Activated CD8-positive, alpha-beta memory T cell treated with anti-CD3 and anti-CD28 coated beads, Interleukin-2, amount 10 ng/mL, durations not matched to agents 7 days and 5 days (primary cell): ENCODE measurements at regions of chr15 and their contacts with region 1.

Region 1: GRCh38 chr15:76973362-76973743 is 21.6 kb upstream of the PSTPIP1 start:
- DNase-seq: peak; percentile 81
- ATAC-seq: peak; percentile 71
- H3K4me3 Mint-ChIP-seq: no peak overlapping the region
- H3K27ac Mint-ChIP-seq: no peak overlapping the region
- H3K4me1 Mint-ChIP-seq: peaks cover 34% of the 10 kb centered on the region
- H3K27me3 Mint-ChIP-seq: no peaks in the 10 kb centered on the region

Region 2: GRCh38 chr15:76185716-76186115 is 787.6 kb before region 1 on chr15:
- CTCF ChIA-PET with region 1: no interaction called
- DNase-seq: peak; percentile 44
- ATAC-seq: no peak
- H3K4me3 Mint-ChIP-seq: no peak overlapping the region
- H3K27ac Mint-ChIP-seq: no peak overlapping the region
- H3K4me1 Mint-ChIP-seq: peaks cover 23% of the 10 kb centered on the region
- H3K27me3 Mint-ChIP-seq: peaks cover 67% of the 10 kb centered on the region

Region 3: DNA sequence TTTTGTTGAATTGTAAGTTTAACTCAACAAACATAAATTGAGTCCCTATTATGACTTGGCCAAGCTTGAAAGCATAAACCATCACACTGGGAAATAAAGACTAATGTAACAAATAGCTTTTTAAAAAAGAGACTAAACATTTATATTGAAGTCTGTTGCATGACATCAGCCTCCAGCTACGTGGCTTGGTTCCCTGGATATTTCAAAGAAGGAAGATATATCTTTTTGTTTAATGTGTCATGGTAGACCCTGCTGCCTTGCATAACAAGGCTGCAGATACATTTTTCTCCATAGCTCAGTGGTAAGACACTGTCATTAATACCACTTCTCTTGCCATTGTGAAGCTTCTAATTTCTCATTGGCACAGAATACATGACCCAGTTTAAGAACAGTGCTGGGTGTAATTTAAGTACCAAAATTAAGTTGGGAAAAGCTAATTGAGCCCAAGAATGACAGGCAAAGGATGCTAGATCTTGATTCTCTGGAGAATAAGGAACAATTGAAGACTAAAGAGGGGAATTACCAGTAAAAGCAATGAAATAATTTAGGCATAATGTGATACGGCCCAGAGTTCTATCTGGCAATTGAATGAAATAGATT is 27.8 kb before region 1 on chr15:
- CTCF ChIA-PET with region 1: interaction called, 11 read pairs
- DNase-seq: no peak
- ATAC-seq: no peak
- H3K4me3 Mint-ChIP-seq: no peak overlapping the region
- H3K27ac Mint-ChIP-seq: no peak overlapping the region
- H3K4me1 Mint-ChIP-seq: peaks cover 3% of the 10 kb centered on the region
- H3K27me3 Mint-ChIP-seq: no peaks in the 10 kb centered on the region

Region 4: DNA sequence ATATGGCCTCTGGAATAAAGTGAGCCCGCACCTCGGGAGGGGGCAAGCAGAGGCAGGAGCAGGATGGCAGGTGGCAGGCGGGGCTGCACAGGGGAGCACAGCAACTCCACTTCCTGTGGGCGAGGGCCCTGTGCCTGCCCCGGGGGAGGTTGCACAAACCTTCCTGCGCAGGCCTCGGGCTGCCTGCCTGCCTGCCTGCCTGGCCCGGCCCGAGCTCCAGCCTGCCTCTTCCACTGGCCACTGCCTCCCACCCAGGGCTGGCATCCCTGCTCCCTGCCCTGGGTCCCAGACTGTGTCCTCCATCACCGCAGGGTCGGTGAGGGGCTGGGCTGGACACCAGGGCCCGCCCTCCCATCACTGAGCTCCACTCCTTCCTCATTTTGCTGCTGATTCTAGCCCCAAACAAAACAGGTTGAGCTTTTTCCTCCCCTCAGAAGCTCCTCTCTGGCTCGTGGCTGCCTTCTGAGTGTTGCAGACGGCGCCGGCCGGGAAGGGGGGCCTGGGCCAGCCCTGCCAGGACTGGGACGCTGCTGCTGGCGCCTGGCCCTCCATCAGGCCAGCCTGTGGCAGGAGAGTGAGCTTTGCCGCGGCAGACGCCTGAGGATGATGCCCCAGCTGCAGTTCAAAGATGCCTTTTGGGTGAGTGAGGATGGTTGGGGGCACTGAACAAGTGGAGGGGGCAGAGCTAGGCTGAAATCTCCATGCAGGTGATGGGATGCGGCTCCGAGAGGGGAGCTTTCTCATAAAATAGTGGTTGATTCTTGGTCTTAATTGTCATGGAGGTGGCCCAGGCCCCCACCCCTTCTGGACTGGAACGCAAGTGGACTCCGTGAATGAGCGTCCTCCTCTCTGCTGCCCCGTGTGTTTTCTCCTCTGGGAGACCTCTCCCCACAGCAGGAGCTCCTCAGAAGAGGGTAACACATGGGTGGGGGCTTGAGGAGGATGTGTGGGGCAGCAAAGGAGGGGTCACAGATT is 21.9 kb after region 1 on chr15 and contains the start of gene PSTPIP1:
- CTCF ChIA-PET with region 1: interaction called, 31 read pairs
- DNase-seq: peak; percentile 88
- ATAC-seq: peak; percentile 74
- H3K4me3 Mint-ChIP-seq: peak within 1 kb of the TSS; percentile 97
- H3K27ac Mint-ChIP-seq: peak within 1 kb of the TSS; percentile 98
- H3K4me1 Mint-ChIP-seq: peaks cover 65% of the 10 kb centered on the region
- H3K27me3 Mint-ChIP-seq: no peaks in the 10 kb centered on the region
- total RNA-seq, gene PSTPIP1: 157 to 255 TPM

Region 5: DNA sequence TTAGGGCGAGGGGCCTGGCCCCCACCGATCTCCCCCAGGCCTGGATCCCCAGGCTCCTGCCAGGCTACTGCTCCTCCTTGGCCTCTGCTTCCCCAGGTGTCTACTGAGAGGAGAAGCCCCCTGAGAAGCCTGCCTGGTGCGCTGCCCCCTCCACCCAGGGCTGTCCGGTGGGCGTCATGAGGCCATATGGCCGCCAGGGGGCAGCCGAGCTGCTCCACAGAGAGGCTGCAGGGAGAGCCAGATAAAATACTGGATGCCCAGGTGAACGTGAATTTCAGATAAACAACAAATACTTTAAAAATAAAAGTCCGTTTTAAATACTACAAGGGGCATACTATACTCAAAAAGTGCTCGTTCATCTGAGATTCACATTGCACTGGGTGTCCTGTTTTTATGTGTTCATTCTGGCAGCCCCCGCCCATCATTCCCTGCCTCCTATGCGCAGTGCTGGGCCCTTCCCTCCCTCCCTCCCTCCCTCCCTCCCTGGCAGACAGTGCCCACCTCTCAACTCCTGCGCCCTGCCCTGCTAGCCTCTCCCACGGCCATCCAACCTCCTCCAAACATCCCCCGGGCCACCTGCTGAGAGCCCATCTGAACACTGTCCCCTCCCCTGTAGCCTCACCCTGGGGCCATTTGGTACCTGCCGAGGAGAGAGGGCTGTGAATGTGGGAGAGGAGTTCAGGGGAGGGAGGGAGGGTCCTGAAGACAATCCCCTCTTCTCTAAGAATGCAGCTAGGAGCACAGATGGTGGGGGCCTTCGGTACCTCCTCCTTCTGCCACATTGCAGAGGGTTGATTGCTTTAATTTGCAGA is 51.1 kb after region 1 on chr15:
- CTCF ChIA-PET with region 1: interaction called, 57 read pairs
- DNase-seq: peak; percentile 79
- ATAC-seq: peak; percentile 20
- H3K4me3 Mint-ChIP-seq: no peak overlapping the region
- H3K27ac Mint-ChIP-seq: peak overlapping the region; percentile 99
- H3K4me1 Mint-ChIP-seq: peaks cover 61% of the 10 kb centered on the region
- H3K27me3 Mint-ChIP-seq: no peaks in the 10 kb centered on the region

Region 6: DNA sequence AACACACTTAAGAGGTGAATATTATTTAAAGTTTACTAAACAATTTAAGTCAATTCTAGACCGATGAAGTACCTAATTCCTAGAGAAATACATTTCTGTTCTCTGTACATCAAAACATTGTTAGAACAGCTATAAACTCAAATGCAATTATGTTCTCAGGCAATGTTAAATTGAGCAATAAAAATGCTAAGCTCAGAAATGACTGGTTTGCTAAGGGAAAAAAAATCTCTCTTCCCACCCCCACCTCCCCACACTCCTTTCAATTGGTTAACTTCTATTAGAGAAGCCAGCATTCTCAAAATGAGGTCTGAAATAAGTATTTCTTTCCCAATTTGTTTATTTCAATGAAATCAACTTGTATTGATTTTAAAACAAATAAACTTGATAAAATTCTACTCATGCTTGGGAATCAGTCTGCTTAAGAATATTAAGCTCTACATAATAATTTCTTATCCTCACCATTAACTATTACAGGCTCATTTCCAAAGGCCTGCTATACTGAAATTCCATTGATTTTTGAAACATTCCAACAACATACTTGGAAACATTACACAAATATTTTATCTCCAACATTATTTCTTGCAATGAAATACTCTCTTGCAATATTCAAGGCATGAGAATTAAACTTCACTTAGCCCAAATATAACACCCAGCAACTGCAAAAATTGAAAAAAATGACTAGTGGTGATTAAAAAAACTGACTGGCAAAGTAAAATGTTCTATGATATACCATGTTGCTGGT is 75.0 kb after region 1 on chr15:
- CTCF ChIA-PET with region 1: interaction called, 10 read pairs
- DNase-seq: no peak
- ATAC-seq: no peak
- H3K4me3 Mint-ChIP-seq: no peak overlapping the region
- H3K27ac Mint-ChIP-seq: no peak overlapping the region
- H3K4me1 Mint-ChIP-seq: peaks cover 2% of the 10 kb centered on the region
- H3K27me3 Mint-ChIP-seq: no peaks in the 10 kb centered on the region

Region 7: GRCh38 chr15:77118882-77119321 is 145.5 kb after region 1 on chr15:
- CTCF ChIA-PET with region 1: interaction called, 10 read pairs
- DNase-seq: peak; percentile 60
- ATAC-seq: peak; percentile 78
- H3K4me3 Mint-ChIP-seq: no peak overlapping the region
- H3K27ac Mint-ChIP-seq: no peak overlapping the region
- H3K4me1 Mint-ChIP-seq: peaks cover 15% of the 10 kb centered on the region
- H3K27me3 Mint-ChIP-seq: no peaks in the 10 kb centered on the region